ENCODE measurements at regions of chr19 and their contacts with region 1.

Region 1: GRCh38 chr19:17469481-17470067 is 750 bp upstream of the SLC27A1 start:
- DNase-seq: peak; percentile 92 to 98 (median 94)
- ATAC-seq: peak; percentile 84
- H3K4me3 ChIP-seq: peak overlapping the region; percentile 76
- H3K27ac ChIP-seq: peak overlapping the region; percentile 73
- H3K4me1 ChIP-seq: peaks cover 30 to 43% of the 10 kb centered on the region in 2 experiments
- H3K27me3 ChIP-seq: no peaks in the 10 kb centered on the region; a peak in 1 of 5 replicates
- CTCF ChIP-seq: no peak
- EP300 ChIP-seq: no peak
- POLR2A ChIP-seq: 0 out of 2 replicates have a peak, but pooled peaks have one; percentile 31
- RAD21 ChIP-seq: no peak

Region 2: DNA sequence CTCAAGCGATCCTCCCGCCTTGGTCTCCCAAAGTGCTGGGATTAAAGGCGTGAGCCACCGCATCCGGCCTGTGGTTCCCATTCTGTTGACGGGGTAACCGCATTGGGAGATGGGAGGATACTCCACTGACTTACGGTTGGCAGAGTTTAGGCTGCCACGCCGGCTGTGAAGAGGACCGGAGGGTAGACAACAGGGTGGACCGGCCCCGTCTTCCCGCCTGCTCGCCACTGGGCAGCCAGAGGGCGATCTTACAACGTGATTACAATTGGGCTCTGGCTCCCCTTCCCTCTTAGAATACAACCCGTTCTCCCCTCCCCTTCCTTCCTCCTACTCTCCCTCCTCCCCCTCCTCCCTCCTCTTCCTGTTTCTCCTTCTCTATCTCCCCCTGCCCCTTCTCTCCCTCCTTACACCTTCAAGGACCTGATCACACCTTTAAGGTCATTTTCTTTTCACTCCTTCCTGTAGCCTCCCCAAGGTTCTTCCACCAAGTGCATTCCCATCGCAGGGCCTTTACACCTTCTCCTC is 74.6 kb before region 1 on chr19:
- CTCF ChIA-PET with region 1: interaction called, 14 read pairs
- POLR2A ChIA-PET with region 1: no interaction called
- in situ Hi-C with region 1: loop called (anchors 5 kb)
- intact Hi-C with region 1: loop called (anchors 1 kb)
- DNase-seq: peak; percentile 83 to 91 (median 85)
- ATAC-seq: peak; percentile 72
- H3K4me3 ChIP-seq: no peak overlapping the region
- H3K27ac ChIP-seq: no peak overlapping the region; the same call in 1 of the 3 replicates
- H3K4me1 ChIP-seq: peaks cover 30 to 50% of the 10 kb centered on the region in 2 experiments
- H3K27me3 ChIP-seq: no peaks in the 10 kb centered on the region
- CTCF ChIP-seq: peak; percentile 83 to 88 (median 85)
- EP300 ChIP-seq: peak; percentile 37; the same call in 1 of the 2 replicates
- POLR2A ChIP-seq: peak; percentile 47; the same call in 1 of the 2 replicates
- RAD21 ChIP-seq: peak; percentile 85 to 94

Region 3: GRCh38 chr19:17455308-17456123 is 14.1 kb before region 1 on chr19:
- CTCF ChIA-PET with region 1: interaction called, 10 read pairs
- POLR2A ChIA-PET with region 1: no interaction called
- in situ Hi-C with region 1: no loop called
- intact Hi-C with region 1: loop called (anchors 2 kb)
- DNase-seq: peak in 2 of 4 experiments; percentile 33 to 34
- ATAC-seq: no peak
- H3K4me3 ChIP-seq: no peak overlapping the region
- H3K27ac ChIP-seq: no peak overlapping the region
- H3K4me1 ChIP-seq: peaks cover 4 to 24% of the 10 kb centered on the region in 2 experiments; a peak in 3 of 5 replicates
- H3K27me3 ChIP-seq: peaks cover 4 to 17% of the 10 kb centered on the region in 2 experiments; a peak in 4 of 5 replicates
- CTCF ChIP-seq: no peak
- EP300 ChIP-seq: no peak
- POLR2A ChIP-seq: no peak
- RAD21 ChIP-seq: no peak